CD4-positive, alpha-beta memory T cell (primary cell): ENCODE measurements at regions of chr10 and their contacts with region 1.

Region 1: GRCh38 chr10:69092959-69093850 is 5.3 kb downstream of the SRGN start:
- DNase-seq: peak; percentile 87 to 92 (median 88)
- H3K4me3 ChIP-seq: no peak overlapping the region
- H3K4me3 Mint-ChIP-seq: peak overlapping the region; percentile 18 to 76 (median 52)
- H3K27ac ChIP-seq: peak overlapping the region; percentile 64
- H3K27ac Mint-ChIP-seq: peak overlapping the region; percentile 87 to 98 (median 93)
- H3K4me1 ChIP-seq: peaks cover 56% of the 10 kb centered on the region
- H3K4me1 Mint-ChIP-seq: peaks cover 38 to 69% (median 51%) of the 10 kb centered on the region in 4 donors
- H3K27me3 ChIP-seq: no peaks in the 10 kb centered on the region
- H3K27me3 Mint-ChIP-seq: peaks cover 0 to 1% of the 10 kb centered on the region in 2 donors

Region 2: DNA sequence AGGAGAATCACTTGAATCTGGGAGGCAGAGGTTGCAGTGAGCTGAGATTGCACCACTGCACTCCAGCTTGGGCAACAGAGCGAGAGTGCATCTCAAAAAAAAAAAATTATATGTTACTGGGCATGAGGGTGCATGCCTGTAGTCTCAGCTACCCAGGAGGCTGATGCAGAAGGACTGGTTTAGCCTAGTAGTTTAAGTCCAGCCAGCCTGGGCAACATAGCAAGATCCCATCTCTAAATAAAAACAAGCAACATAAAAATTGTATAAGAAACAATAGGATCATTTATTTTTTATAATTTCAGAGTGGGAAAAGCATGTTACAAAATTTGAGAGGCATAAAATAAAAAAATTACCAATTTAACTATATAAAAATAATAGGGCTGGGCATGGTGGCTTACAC is 387.7 kb before region 1 on chr10:
- CTCF ChIA-PET with region 1: no interaction called
- POLR2A ChIA-PET with region 1: no interaction called
- intact Hi-C with region 1: no loop called
- DNase-seq: no peak
- H3K4me3 ChIP-seq: no peak overlapping the region
- H3K4me3 Mint-ChIP-seq: no peak overlapping the region
- H3K27ac ChIP-seq: no peak overlapping the region
- H3K27ac Mint-ChIP-seq: no peak overlapping the region
- H3K4me1 ChIP-seq: no peaks in the 10 kb centered on the region
- H3K4me1 Mint-ChIP-seq: no peaks in the 10 kb centered on the region
- H3K27me3 ChIP-seq: no peaks in the 10 kb centered on the region
- H3K27me3 Mint-ChIP-seq: no peaks in the 10 kb centered on the region

Region 3: DNA sequence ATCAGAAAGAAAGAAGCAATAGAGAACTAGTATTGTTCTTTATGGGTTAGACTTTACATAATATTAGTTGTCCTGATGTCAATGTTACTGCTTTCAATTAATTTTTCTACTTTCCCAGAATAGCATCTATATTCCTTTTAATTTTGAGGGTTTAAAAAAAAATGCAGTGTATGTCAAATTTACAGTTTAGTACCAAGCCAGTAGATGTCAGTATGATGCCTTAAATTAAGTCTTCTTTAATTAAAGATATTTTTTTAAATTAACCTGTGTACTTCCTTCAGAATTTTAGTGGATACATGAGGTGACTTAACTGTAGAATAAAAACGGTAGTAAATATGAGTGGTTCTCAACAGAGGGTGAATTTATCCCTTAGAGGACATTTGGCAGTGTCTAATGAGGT is 301.1 kb before region 1 on chr10:
- CTCF ChIA-PET with region 1: no interaction called
- POLR2A ChIA-PET with region 1: no interaction called
- intact Hi-C with region 1: no loop called
- DNase-seq: no peak
- H3K4me3 ChIP-seq: no peak overlapping the region
- H3K4me3 Mint-ChIP-seq: no peak overlapping the region
- H3K27ac ChIP-seq: no peak overlapping the region
- H3K27ac Mint-ChIP-seq: no peak overlapping the region
- H3K4me1 ChIP-seq: no peaks in the 10 kb centered on the region
- H3K4me1 Mint-ChIP-seq: no peaks in the 10 kb centered on the region
- H3K27me3 ChIP-seq: no peaks in the 10 kb centered on the region
- H3K27me3 Mint-ChIP-seq: no peaks in the 10 kb centered on the region

Region 4: GRCh38 chr10:68963151-68963550 is 130.1 kb before region 1 on chr10:
- CTCF ChIA-PET with region 1: interaction called, 53 read pairs
- POLR2A ChIA-PET with region 1: no interaction called
- intact Hi-C with region 1: no loop called
- DNase-seq: no peak
- H3K4me3 ChIP-seq: no peak overlapping the region
- H3K4me3 Mint-ChIP-seq: no peak overlapping the region
- H3K27ac ChIP-seq: no peak overlapping the region
- H3K27ac Mint-ChIP-seq: peak overlapping the region in 1 of 7 donors; percentile 41
- H3K4me1 ChIP-seq: peaks cover 38% of the 10 kb centered on the region
- H3K4me1 Mint-ChIP-seq: peaks cover 13 to 29% (median 24%) of the 10 kb centered on the region in 4 donors
- H3K27me3 ChIP-seq: no peaks in the 10 kb centered on the region
- H3K27me3 Mint-ChIP-seq: no peaks in the 10 kb centered on the region

Region 5: DNA sequence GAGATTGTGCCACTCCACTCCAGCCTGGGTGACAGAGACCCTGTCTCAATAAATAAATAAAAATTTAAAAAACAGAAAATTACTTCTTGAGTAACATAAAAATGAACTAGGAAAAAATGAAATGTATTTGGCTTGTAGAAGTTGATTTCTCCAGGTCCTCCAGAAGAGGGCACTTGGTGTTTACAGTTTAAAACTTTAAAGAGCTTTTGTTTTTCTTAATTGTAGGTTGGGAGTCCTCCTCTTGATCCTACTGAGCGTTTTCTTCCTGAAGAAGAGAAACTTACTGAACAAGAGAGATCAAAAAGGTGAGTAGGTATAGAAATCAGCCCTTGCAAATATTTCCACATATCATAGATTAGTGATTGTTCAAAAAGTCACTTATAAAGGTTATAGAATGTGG is 88.4 kb before region 1 on chr10:
- CTCF ChIA-PET with region 1: interaction called, 228 read pairs
- POLR2A ChIA-PET with region 1: interaction called, 56 read pairs
- intact Hi-C with region 1: loop called (anchors 1 kb)
- DNase-seq: peak in 4 of 5 donors; percentile 62 to 70 (median 64)
- H3K4me3 ChIP-seq: no peak overlapping the region
- H3K4me3 Mint-ChIP-seq: no peak overlapping the region
- H3K27ac ChIP-seq: no peak overlapping the region
- H3K27ac Mint-ChIP-seq: peak overlapping the region in 1 of 7 donors; percentile 38
- H3K4me1 ChIP-seq: no peaks in the 10 kb centered on the region
- H3K4me1 Mint-ChIP-seq: peaks cover 1 to 5% (median 3%) of the 10 kb centered on the region in 4 donors
- H3K27me3 ChIP-seq: no peaks in the 10 kb centered on the region
- H3K27me3 Mint-ChIP-seq: no peaks in the 10 kb centered on the region

Region 6: DNA sequence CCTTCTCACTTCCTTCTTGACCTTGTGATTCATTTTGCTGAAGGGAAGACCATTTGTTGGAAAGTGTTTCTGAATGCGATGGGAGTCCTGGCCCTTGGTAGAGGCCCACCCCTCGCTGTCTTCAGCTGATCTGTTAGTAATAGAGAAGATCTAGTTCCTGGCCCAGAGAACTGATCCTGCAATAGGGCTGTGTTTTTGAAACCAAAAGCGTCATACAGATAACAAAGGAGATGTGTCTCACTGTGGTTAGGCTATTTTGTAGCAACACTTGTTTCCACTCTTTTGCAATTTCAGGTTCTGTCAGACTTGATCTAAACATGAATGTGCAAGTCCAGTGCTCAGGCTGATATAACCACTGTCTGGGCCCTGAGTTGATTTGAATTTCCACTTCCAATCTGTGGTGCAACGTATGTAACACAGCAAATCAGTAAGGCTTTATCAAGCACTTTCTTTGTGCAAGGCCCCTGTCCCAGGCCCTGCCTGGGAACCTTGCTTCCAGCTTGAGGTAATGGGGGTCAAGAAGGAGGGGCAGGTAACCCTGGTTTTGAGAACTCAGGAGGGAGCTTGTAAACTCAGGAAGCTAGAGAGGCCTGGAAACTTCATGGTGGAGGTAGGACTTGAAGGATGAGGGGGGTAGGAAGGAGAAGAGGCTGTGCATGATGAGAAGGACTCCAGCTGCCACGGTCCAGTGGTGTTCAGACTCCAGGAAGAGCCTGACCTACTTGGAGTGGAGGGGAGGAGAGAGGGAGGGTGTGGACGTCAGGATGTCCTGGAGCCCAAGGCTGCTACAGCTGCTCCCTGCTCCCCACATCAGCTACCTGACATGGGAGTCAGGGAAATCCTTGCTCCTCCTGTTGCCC is 47.5 kb before region 1 on chr10:
- CTCF ChIA-PET with region 1: interaction called, 27 read pairs
- POLR2A ChIA-PET with region 1: interaction called, 110 read pairs
- intact Hi-C with region 1: loop called (anchors 1 kb)
- DNase-seq: peak; percentile 54 to 70 (median 63)
- H3K4me3 ChIP-seq: no peak overlapping the region
- H3K4me3 Mint-ChIP-seq: peak overlapping the region in 7 of 8 donors; percentile 73 to 89 (median 77)
- H3K27ac ChIP-seq: peak overlapping the region; percentile 45
- H3K27ac Mint-ChIP-seq: peak overlapping the region; percentile 93 to 99 (median 97)
- H3K4me1 ChIP-seq: peaks cover 32% of the 10 kb centered on the region
- H3K4me1 Mint-ChIP-seq: peaks cover 19 to 32% (median 27%) of the 10 kb centered on the region in 4 donors
- H3K27me3 ChIP-seq: no peaks in the 10 kb centered on the region
- H3K27me3 Mint-ChIP-seq: no peaks in the 10 kb centered on the region

Region 7: DNA sequence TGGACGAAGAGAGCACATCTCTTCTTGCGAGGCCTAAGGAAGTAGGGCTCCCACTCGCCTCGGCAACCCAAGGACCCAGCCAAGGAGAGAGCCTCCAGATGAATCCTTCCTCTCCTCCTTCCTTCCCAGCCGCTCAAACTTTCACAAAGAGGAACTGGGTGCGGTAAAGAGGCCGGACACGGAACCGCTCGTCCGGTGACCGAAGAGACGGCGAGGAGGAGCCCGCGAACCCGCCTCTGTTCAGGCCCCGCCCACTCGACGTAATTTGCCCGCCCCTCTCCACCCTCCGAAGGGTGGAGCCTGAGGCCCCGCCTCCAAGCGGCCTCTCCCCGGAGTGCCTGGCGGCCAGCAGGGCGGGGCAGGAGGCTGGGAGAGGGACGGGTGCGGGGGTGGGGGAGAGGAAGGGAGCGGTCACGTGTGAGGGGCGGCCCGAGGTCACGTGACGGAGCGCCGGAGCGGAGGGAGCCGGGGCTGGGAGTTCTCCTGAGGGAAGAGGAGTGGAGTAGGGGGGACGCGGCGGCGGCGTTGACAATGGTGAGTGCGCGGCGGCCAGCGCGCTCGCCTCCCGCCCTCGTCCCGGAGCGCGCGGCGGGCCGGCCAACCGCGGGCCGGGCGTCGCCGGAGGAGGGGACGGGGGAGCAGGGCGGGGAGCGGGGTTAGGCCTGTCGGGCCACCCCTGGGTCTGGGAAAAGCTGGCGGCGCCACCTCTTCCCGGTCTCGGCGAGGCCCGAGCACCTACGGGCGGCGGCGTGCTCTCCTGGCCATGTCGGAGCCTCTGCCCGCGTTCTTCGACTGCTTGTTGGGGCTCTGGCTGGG is 30.8 kb after region 1 on chr10 and contains the start of gene VPS26A:
- CTCF ChIA-PET with region 1: interaction called, 12 read pairs
- POLR2A ChIA-PET with region 1: interaction called, 10 read pairs
- intact Hi-C with region 1: loop called (anchors 1 kb)
- DNase-seq: peak; percentile 98 to 100 (median 98)
- H3K4me3 ChIP-seq: peak within 1 kb of the TSS; percentile 47 to 81
- H3K4me3 Mint-ChIP-seq: peak within 1 kb of the TSS; percentile 92 to 96 (median 94)
- H3K27ac ChIP-seq: peak within 1 kb of the TSS; percentile 96
- H3K27ac Mint-ChIP-seq: peak within 1 kb of the TSS; percentile 96 to 99 (median 98)
- H3K4me1 ChIP-seq: peaks cover 37% of the 10 kb centered on the region
- H3K4me1 Mint-ChIP-seq: peaks cover 13 to 29% (median 21%) of the 10 kb centered on the region in 4 donors
- H3K27me3 ChIP-seq: no peaks in the 10 kb centered on the region
- H3K27me3 Mint-ChIP-seq: no peaks in the 10 kb centered on the region
- total RNA-seq, gene VPS26A: 31.7 to 35.9 TPM

Region 8: DNA sequence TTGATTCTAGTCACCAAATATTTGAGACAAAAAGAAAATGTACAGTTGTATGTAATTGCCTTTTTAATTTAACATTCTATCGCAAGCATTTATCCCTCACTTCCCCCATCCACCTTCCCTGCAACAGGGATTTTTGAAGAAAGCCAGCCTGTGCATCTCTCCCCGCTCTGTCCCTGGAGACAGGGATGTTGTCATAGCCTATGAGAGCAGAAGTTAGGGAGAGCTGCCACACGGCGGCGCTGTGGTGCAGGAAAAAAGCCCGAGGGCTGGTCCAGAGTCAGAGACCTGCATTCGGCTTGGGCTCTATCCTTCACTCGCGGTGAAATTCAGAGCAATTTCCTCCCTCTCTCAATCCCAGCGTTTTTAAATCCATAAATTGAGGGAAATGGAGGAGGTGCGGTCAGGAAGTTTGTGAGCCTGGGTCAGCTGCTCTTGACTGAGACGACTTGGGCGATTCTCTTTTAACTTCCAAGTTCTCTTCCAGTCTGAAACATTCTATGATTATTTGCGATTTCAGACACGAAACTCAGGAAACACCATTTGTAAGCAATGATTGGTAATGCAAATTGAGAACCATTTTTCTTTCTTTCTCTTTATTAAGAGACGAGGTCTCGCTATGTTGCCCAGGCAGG is 144.4 kb after region 1 on chr10:
- CTCF ChIA-PET with region 1: no interaction called
- POLR2A ChIA-PET with region 1: no interaction called
- intact Hi-C with region 1: no loop called
- DNase-seq: peak; percentile 78 to 82 (median 79)
- H3K4me3 ChIP-seq: no peak overlapping the region
- H3K4me3 Mint-ChIP-seq: peak overlapping the region in 2 of 8 donors; percentile 7 to 48
- H3K27ac ChIP-seq: no peak overlapping the region
- H3K27ac Mint-ChIP-seq: peak overlapping the region in 3 of 7 donors; percentile 11 to 63 (median 17)
- H3K4me1 ChIP-seq: peaks cover 17% of the 10 kb centered on the region
- H3K4me1 Mint-ChIP-seq: peaks cover 14 to 27% (median 17%) of the 10 kb centered on the region in 4 donors
- H3K27me3 ChIP-seq: no peaks in the 10 kb centered on the region
- H3K27me3 Mint-ChIP-seq: no peaks in the 10 kb centered on the region

Region 9: DNA sequence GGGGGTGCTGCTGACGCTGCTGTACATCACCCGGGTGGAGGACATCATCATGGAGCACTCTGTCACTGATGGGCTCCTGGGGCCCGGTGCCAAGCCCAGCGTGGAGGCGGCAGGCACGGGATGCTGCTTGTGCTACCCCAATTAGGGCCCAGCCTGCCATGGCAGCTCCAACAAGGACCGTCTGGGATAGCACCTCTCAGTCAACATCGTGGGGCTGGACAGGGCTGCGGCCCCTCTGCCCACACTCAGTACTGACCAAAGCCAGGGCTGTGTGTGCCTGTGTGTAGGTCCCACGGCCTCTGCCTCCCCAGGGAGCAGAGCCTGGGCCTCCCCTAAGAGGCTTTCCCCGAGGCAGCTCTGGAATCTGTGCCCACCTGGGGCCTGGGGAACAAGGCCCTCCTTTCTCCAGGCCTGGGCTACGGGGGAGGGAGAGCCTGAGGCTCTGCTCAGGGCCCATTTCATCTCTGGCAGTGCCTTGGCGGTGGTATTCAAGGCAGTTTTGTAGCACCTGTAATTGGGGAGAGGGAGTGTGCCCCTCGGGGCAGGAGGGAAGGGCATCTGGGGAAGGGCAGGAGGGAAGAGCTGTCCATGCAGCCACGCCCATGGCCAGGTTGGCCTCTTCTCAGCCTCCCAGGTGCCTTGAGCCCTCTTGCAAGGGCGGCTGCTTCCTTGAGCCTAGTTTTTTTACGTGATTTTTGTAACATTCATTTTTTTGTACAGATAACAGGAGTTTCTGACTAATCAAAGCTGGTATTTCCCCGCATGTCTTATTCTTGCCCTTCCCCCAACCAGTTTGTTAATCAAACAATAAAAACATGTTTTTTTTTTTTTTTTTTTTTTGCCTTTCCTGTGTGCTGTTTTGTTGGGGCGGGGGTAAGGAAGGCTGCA is 413.9 kb after region 1 on chr10:
- CTCF ChIA-PET with region 1: no interaction called
- POLR2A ChIA-PET with region 1: no interaction called
- intact Hi-C with region 1: loop called (anchors 2 kb)
- DNase-seq: peak in 1 of 5 donors; percentile 62
- H3K4me3 ChIP-seq: peak overlapping the region in 1 of 2 donors; percentile 51
- H3K4me3 Mint-ChIP-seq: peak overlapping the region; percentile 68 to 86 (median 78)
- H3K27ac ChIP-seq: peak overlapping the region; percentile 39
- H3K27ac Mint-ChIP-seq: peak overlapping the region; percentile 84 to 98 (median 92)
- H3K4me1 ChIP-seq: peaks cover 20% of the 10 kb centered on the region
- H3K4me1 Mint-ChIP-seq: peaks cover 9 to 20% (median 14%) of the 10 kb centered on the region in 4 donors
- H3K27me3 ChIP-seq: no peaks in the 10 kb centered on the region
- H3K27me3 Mint-ChIP-seq: no peaks in the 10 kb centered on the region

Region 10: GRCh38 chr10:70619271-70620019 is 1526.2 kb after region 1 on chr10:
- CTCF ChIA-PET with region 1: no interaction called
- POLR2A ChIA-PET with region 1: no interaction called
- intact Hi-C with region 1: no loop called
- DNase-seq: no peak
- H3K4me3 ChIP-seq: no peak overlapping the region
- H3K4me3 Mint-ChIP-seq: no peak overlapping the region
- H3K27ac ChIP-seq: no peak overlapping the region
- H3K27ac Mint-ChIP-seq: peak overlapping the region in 1 of 7 donors; percentile 9
- H3K4me1 ChIP-seq: no peaks in the 10 kb centered on the region
- H3K4me1 Mint-ChIP-seq: peaks cover 0 to 23% (median 2%) of the 10 kb centered on the region in 4 donors
- H3K27me3 ChIP-seq: no peaks in the 10 kb centered on the region
- H3K27me3 Mint-ChIP-seq: peaks cover 9 to 10% of the 10 kb centered on the region in 2 donors